ENCODE measurements at regions of chr14 and their contacts with region 1.

Region 1: DNA sequence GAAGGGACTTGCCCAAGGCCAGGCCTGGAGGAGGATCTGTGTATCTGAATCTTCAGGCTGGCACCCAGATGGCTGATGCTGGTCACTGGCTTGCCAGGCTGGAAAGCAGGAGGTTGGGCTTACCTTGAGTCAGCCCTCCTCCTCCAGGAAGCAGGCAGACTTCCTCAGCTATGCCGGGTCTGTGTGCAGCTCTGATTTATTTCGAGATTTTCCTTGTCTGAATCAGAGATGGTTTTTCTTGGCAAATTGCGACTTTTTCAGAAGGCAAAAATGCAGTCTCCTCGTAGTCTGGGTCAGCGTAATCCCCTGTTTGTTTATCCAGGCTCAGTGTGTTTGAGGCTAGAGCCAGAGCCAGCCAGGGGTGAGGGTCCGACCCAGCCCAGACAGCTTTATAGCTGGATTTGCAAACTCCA is 48.9 kb downstream of the SMOC1 start:
- DNase-seq: no peak
- H3K4me3 ChIP-seq: no peak overlapping the region
- H3K27ac ChIP-seq: peak overlapping the region; percentile 64 to 69
- H3K4me1 ChIP-seq: peaks cover 0 to 44% (median 25%) of the 10 kb centered on the region in 4 donors
- H3K27me3 ChIP-seq: no peaks in the 10 kb centered on the region
- CTCF ChIP-seq: no peak

Region 2: GRCh38 chr14:69997849-69998248 is 69.7 kb after region 1 on chr14:
- intact Hi-C with region 1: loop called (anchors 10 kb)
- DNase-seq: peak; percentile 51 to 77
- H3K4me3 ChIP-seq: no peak overlapping the region
- H3K27ac ChIP-seq: peak overlapping the region; percentile 24 to 54
- H3K4me1 ChIP-seq: peaks cover 0 to 35% (median 23%) of the 10 kb centered on the region in 4 donors
- H3K27me3 ChIP-seq: no peaks in the 10 kb centered on the region
- CTCF ChIP-seq: no peak